Ascending aorta (tissue), 2 donors: ENCODE measurements at regions of chr6 and their contacts with region 1.

Region 1: GRCh38 chr6:170529839-170530469 is 23.2 kb downstream of the PSMB1 start:
- DNase-seq: peak in 1 of 2 donors; percentile 80
- H3K4me3 ChIP-seq: no peak overlapping the region
- H3K27ac ChIP-seq: no peak overlapping the region
- H3K4me1 ChIP-seq: no peaks in the 10 kb centered on the region
- H3K27me3 ChIP-seq: no peaks in the 10 kb centered on the region
- CTCF ChIP-seq: peak; percentile 46 to 89 (median 68)

Region 2: DNA sequence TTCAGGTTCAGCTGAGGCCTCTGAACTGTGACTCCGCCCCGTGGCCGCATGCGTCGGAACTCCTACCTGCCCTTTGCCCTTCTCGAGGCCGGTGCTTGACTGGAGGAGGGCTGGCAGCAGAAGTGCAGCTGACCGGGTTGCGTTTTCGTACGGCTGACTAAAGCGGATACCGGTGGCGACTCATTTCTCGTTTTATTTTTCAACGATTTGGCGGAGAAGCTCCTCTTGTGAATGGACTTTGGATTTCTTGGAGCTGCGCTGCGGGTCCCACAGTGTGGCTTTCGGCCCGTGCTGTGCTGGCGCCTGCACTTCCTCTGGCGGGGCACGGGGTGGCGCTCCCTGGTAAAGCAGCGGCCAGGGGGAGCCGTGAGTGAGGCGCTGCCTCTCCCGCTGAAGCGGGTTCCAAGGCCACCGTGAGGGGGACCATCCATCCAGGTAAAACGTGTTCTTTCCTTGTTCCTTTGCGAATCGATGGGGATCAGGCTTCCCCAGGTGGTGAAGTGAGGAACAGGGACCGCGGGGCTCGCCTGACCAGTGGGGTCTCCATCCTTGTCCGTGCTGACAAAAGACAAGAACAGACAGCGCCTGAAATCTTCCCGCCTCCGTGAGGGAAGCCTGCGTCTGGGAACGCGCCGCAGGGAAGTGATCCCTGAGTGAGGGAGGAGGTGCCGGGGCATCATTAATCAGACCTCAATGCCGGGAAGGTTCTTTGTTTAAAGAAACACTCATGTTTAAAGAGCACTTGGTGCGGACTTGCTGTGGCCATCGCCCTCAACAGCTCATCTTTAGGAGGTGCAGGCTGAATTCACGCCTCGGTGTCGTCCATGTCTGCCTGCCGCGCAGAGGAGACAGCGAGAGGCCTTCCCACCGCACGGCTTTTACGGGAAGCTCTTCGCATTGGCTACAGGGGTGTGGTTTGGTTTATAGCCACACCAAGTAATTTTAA is 739.7 kb before region 1 on chr6:
- intact Hi-C with region 1: loop called (anchors 2 kb)
- DNase-seq: peak in 1 of 2 donors; percentile 80
- H3K4me3 ChIP-seq: peak overlapping the region; percentile 63 to 69
- H3K27ac ChIP-seq: peak overlapping the region; percentile 24 to 59
- H3K4me1 ChIP-seq: peaks cover 0 to 5% of the 10 kb centered on the region in 2 donors
- H3K27me3 ChIP-seq: no peaks in the 10 kb centered on the region
- CTCF ChIP-seq: peak; percentile 93 to 100 (median 99)

Region 3: DNA sequence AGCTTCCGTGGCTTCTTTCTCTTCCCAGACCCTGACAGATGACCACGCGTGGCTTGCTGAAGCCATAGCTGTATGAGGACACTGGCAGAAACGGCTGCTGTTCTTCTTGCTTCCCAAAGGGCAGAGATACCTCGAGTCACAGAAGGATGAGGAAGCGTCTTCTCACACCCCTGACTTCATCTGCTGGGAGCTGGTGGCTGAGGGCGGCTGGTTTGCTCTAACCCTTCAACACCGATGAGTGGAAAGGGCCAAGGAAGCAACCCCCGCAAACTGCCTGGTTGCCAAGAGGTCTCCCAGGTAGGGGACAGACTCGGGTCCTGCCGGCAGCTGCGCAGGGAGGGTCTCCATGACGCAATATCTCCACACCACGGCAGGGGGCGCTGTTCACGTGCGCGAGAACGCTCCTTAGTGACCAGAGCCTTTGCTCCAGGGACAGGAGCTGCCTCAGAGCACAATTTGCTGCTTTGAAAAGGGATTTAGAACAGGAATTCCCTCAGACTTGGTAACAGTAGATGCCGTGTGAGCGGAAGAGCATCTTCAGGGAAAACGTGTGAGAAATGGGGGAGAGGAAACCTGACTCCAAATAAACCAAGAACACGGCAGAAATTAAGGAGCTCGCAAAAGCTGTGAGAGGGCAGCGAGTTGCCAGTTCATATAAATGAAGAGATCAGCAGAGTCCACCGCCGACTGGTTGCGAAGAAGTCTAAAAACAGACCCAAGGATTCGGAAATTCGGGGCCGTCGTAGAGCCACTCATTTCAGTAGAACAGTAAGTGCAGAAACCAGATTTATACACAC is 698.3 kb before region 1 on chr6:
- intact Hi-C with region 1: loop called (anchors 2 kb)
- DNase-seq: peak in 1 of 2 donors; percentile 74
- H3K4me3 ChIP-seq: no peak overlapping the region
- H3K27ac ChIP-seq: no peak overlapping the region
- H3K4me1 ChIP-seq: no peaks in the 10 kb centered on the region
- H3K27me3 ChIP-seq: no peaks in the 10 kb centered on the region
- CTCF ChIP-seq: peak; percentile 69 to 82 (median 73)